ENCODE measurements at regions of chr1 and their contacts with region 1.

Region 1: GRCh38 chr1:206912445-206913095 is 9.2 kb downstream of the FCMR start:
- DNase-seq: peak in 2 of 4 donors; percentile 64 to 81
- ATAC-seq: peak; percentile 54
- H3K4me3 ChIP-seq: no peak overlapping the region
- H3K27ac ChIP-seq: no peak overlapping the region
- H3K4me1 ChIP-seq: peaks cover 4 to 43% of the 10 kb centered on the region in 2 donors
- H3K27me3 ChIP-seq: peaks cover 7 to 35% of the 10 kb centered on the region in 2 donors
- CTCF ChIP-seq: peak; percentile 81 to 94

Region 2: DNA sequence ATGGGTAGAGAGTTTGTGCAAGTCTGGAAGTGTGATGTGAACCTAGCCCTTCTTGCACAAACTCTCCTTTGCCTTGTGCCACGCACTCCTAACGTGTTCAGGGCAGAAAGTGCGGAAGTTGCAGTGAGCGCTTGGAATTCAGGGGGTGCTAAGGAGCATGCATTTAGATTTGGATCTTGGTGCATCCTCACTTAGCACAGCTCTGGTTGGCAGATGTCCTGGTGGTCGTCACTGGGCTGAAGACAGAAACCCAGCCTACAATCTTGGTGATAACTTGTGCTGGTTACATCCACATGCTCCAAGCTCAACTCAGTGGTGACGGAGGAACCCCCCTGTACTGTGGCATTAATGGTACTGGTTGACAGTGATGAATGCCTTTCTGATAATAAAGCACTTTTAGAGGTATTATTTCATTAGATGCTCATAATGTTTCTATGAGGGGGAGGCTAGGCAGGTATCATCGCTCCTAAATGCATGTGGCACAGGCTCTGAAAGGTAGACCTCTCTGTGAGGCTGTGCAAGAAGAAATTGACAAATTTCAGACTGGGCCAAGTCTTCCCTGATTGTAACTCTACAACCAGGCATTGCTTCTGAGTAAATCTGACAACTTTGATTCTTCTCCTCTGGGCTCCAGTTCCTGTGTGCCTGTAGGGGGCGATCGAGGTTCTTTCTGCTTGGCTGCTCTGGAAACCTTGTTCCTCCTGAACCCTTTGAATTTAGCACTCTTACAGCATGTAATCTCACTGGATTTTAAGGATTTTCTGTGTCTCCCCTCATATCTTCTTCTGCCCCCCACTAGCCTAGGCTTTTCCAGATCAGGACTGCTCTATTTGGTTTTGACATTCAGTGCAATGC is 187.2 kb before region 1 on chr1:
- intact Hi-C with region 1: loop called in 1 of 2 experiments (anchors 5 kb)
- DNase-seq: no peak
- ATAC-seq: peak; percentile 45
- H3K4me3 ChIP-seq: no peak overlapping the region
- H3K27ac ChIP-seq: peak overlapping the region; percentile 73 to 75
- H3K4me1 ChIP-seq: peaks cover 28 to 80% of the 10 kb centered on the region in 2 donors
- H3K27me3 ChIP-seq: no peaks in the 10 kb centered on the region
- CTCF ChIP-seq: peak; percentile 52 to 56

Region 3: GRCh38 chr1:206814716-206815341 is 97.7 kb before region 1 on chr1:
- intact Hi-C with region 1: loop called in 1 of 2 experiments (anchors 5 kb)
- DNase-seq: peak in 2 of 4 donors; percentile 22 to 43
- ATAC-seq: no peak
- H3K4me3 ChIP-seq: no peak overlapping the region
- H3K27ac ChIP-seq: no peak overlapping the region
- H3K4me1 ChIP-seq: no peaks in the 10 kb centered on the region
- H3K27me3 ChIP-seq: no peaks in the 10 kb centered on the region
- CTCF ChIP-seq: no peak

Region 4: DNA sequence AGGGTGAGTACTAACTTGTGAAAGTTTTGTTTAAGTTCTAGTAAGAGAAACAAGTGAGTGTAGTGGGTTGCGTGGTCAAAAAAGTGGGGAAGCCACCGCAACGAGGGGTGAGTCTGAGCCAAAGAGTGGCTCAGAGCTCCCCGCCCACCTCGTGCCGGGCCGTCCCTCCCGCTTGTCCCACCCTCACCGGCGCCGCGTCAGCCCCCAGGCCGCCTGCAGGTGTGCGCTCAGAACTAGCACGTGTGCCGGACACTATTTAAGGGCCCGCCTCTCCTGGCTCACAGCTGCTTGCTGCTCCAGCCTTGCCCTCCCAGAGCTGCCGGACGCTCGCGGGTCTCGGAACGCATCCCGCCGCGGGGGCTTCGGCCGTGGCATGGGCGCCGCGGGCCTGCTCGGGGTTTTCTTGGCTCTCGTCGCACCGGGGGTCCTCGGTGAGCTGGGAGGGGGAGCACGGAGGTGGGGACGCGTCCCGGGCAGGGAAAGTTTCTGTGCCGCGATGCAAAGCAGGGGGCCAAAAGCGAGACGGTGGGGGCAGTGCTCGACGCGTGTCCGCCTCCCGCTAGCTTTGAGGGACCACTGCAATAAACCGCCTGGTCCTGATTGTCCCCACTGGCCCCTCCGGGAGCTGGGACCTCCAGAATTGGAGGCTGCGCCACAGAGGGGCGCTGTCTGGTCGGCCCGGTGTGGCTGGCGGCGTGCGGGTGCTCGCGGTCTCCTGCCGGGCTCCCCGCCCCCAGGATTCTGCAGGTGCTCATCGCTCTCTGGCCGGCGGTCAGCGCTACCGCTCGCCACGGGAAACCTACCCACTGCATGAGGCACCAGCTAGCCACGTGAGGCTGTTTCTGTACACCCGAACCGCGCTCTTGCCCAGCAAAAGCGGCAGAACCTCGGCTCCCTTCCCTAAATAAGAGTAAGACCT is 541.7 kb after region 1 on chr1 and contains the start of gene CR2:
- intact Hi-C with region 1: no loop called
- DNase-seq: peak in 3 of 4 donors; percentile 51 to 87 (median 60)
- ATAC-seq: peak; percentile 97
- H3K4me3 ChIP-seq: peak within 1 kb of the TSS; percentile 21 to 40
- H3K27ac ChIP-seq: no peak within 1 kb of the TSS
- H3K4me1 ChIP-seq: peaks cover 10 to 15% of the 10 kb centered on the region in 2 donors
- H3K27me3 ChIP-seq: peaks cover 39 to 75% of the 10 kb centered on the region in 2 donors
- CTCF ChIP-seq: no peak
- polyA plus RNA-seq, gene CR2: 0.08 to 0.95 (median 0.25) TPM